WTC11 (cell line): ENCODE measurements at regions of chr13 and their contacts with region 1.

Region 1: DNA sequence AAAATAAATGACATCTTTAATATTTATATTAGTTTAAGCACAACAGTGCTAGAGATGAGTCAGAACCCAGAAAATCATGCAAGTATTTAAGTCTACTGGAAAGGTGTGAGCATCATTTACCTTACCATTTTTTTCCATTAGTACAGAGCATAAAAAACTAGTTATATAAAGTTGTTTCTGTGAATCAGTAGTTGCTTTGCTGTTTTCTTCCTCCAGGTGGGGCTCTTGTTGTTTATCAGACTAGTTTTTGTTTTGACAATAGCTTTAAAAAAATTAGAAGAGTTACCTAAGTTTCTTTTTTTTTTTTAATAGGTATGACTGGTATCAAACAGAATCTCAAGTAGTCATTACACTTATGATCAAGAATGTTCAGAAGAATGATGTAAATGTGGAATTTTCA is 12.7 kb downstream of the SUGT1 start:
- DNase-seq: no peak
- ATAC-seq: no peak
- H3K4me3 Mint-ChIP-seq: no peak overlapping the region
- H3K27ac Mint-ChIP-seq: no peak overlapping the region
- H3K4me1 Mint-ChIP-seq: peaks cover 2% of the 10 kb centered on the region; the same call in 1 of the 2 replicates
- H3K27me3 Mint-ChIP-seq: no peaks in the 10 kb centered on the region
- CTCF ChIP-seq: no peak

Region 2: GRCh38 chr13:52652196-52652979 is 12.9 kb before region 1 on chr13 and contains the start of gene SUGT1:
- CTCF ChIA-PET with region 1: interaction called, 20 read pairs
- POLR2A ChIA-PET with region 1: interaction called, 4 read pairs
- DNase-seq: peak; percentile 96
- ATAC-seq: peak; percentile 96
- H3K4me3 Mint-ChIP-seq: no peak within 1 kb of the TSS
- H3K27ac Mint-ChIP-seq: no peak within 1 kb of the TSS
- H3K4me1 Mint-ChIP-seq: peaks cover 7% of the 10 kb centered on the region
- H3K27me3 Mint-ChIP-seq: no peaks in the 10 kb centered on the region
- CTCF ChIP-seq: no peak; the same call in 1 of the 2 replicates
- total RNA-seq, gene SUGT1: 74.8 to 77.6 TPM (median 76.3 TPM) in 3 replicates

Region 3: DNA sequence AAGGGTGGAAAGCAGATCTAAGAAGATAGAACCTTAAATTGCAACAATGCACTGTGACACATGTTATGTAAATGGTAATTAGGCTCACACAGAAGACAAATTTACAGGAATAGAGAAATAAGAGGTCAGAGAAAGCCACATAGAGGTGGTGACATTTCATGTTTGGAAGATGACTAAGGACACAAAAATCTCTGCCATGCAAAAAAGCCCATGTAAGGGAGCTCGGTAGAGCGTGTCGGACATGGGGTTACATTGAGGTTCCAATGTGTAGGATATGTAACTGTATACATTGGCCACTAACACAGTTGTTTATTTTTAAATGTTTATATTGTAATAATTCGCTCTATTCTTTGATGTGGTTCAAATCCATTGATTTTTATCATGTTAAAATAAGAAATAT is 21.1 kb after region 1 on chr13:
- CTCF ChIA-PET with region 1: interaction called, 12 read pairs
- POLR2A ChIA-PET with region 1: no interaction called
- DNase-seq: no peak
- ATAC-seq: no peak
- H3K4me3 Mint-ChIP-seq: no peak overlapping the region
- H3K27ac Mint-ChIP-seq: peak overlapping the region; percentile 10; the same call in 1 of the 2 replicates
- H3K4me1 Mint-ChIP-seq: no peaks in the 10 kb centered on the region
- H3K27me3 Mint-ChIP-seq: no peaks in the 10 kb centered on the region
- CTCF ChIP-seq: no peak

Region 4: GRCh38 chr13:52804202-52804641 is 138.9 kb after region 1 on chr13:
- CTCF ChIA-PET with region 1: interaction called, 65 read pairs
- POLR2A ChIA-PET with region 1: interaction called, 5 read pairs
- DNase-seq: no peak
- ATAC-seq: no peak
- H3K4me3 Mint-ChIP-seq: no peak overlapping the region
- H3K27ac Mint-ChIP-seq: no peak overlapping the region
- H3K4me1 Mint-ChIP-seq: peaks cover 18% of the 10 kb centered on the region
- H3K27me3 Mint-ChIP-seq: no peaks in the 10 kb centered on the region
- CTCF ChIP-seq: no peak

Region 5: GRCh38 chr13:53038993-53039392 is 373.7 kb after region 1 on chr13:
- CTCF ChIA-PET with region 1: no interaction called
- POLR2A ChIA-PET with region 1: no interaction called
- DNase-seq: no peak
- ATAC-seq: no peak
- H3K4me3 Mint-ChIP-seq: no peak overlapping the region
- H3K27ac Mint-ChIP-seq: no peak overlapping the region
- H3K4me1 Mint-ChIP-seq: peaks cover 6% of the 10 kb centered on the region; the same call in 1 of the 2 replicates
- H3K27me3 Mint-ChIP-seq: no peaks in the 10 kb centered on the region
- CTCF ChIP-seq: no peak